Activated B cell treated with CpG ODN at 0.5 μM for 24 hours (primary cell): ENCODE measurements at regions of chr14 and their contacts with region 1.

Region 1: DNA sequence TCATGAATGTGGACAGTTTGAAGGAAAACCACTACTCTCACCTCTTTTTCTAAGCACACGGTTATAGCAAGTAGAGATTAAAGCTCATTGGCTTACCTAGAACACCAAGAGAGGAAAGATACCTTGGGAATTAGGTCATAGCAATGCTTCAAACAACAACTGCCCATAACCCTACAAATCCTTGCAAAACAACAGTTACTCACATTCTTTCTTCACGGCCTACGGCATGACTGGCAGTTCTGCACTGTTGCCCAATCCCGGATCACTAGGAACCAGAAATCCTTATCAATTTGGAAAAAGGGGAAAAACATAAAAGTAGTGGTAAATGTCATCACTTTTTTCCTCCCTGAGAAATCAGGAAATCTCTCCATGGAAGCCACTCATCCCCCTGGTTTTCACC is 9.6 kb upstream of the ISM2 start:
- DNase-seq: no peak
- ATAC-seq: no peak
- H3K4me3 Mint-ChIP-seq: no peak overlapping the region
- H3K27ac Mint-ChIP-seq: no peak overlapping the region
- H3K4me1 Mint-ChIP-seq: no peaks in the 10 kb centered on the region
- H3K27me3 Mint-ChIP-seq: no peaks in the 10 kb centered on the region
- CTCF ChIP-seq: no peak

Region 2: GRCh38 chr14:77641534-77642341 is 133.5 kb after region 1 on chr14:
- CTCF ChIA-PET with region 1: no interaction called
- POLR2A ChIA-PET with region 1: interaction called, 15 read pairs
- intact Hi-C with region 1: no loop called
- DNase-seq: peak; percentile 61
- ATAC-seq: peak; percentile 78
- H3K4me3 Mint-ChIP-seq: peak overlapping the region; percentile 95
- H3K27ac Mint-ChIP-seq: peak overlapping the region; percentile 93
- H3K4me1 Mint-ChIP-seq: peaks cover 16% of the 10 kb centered on the region
- H3K27me3 Mint-ChIP-seq: no peaks in the 10 kb centered on the region
- CTCF ChIP-seq: no peak